Activated CD4-positive, alpha-beta memory T cell treated with anti-CD3 and anti-CD28 coated beads for 36 hours (primary cell): ENCODE measurements at regions of chr5 and their contacts with region 1.

Region 1: GRCh38 chr5:40688127-40688761 is 8.5 kb downstream of the PTGER4 start:
- DNase-seq: peak; percentile 91
- H3K4me3 Mint-ChIP-seq: peak overlapping the region; percentile 93
- H3K27ac Mint-ChIP-seq: peak overlapping the region; percentile 97
- H3K4me1 Mint-ChIP-seq: peaks cover 65% of the 10 kb centered on the region
- H3K27me3 Mint-ChIP-seq: no peaks in the 10 kb centered on the region

Region 2: GRCh38 chr5:40021007-40021406 is 667.2 kb before region 1 on chr5:
- CTCF ChIA-PET with region 1: no interaction called
- POLR2A ChIA-PET with region 1: no interaction called
- intact Hi-C with region 1: loop called (anchors 5 kb)
- DNase-seq: no peak
- H3K4me3 Mint-ChIP-seq: no peak overlapping the region
- H3K27ac Mint-ChIP-seq: no peak overlapping the region
- H3K4me1 Mint-ChIP-seq: peaks cover 2% of the 10 kb centered on the region
- H3K27me3 Mint-ChIP-seq: peaks cover 5% of the 10 kb centered on the region

Region 3: GRCh38 chr5:40277161-40277906 is 410.9 kb before region 1 on chr5:
- CTCF ChIA-PET with region 1: interaction called, 6 read pairs
- POLR2A ChIA-PET with region 1: interaction called, 3 read pairs
- intact Hi-C with region 1: loop called (anchors 2 kb)
- DNase-seq: peak; percentile 63
- H3K4me3 Mint-ChIP-seq: peak overlapping the region; percentile 18
- H3K27ac Mint-ChIP-seq: peak overlapping the region; percentile 97
- H3K4me1 Mint-ChIP-seq: peaks cover 61% of the 10 kb centered on the region
- H3K27me3 Mint-ChIP-seq: no peaks in the 10 kb centered on the region

Region 4: DNA sequence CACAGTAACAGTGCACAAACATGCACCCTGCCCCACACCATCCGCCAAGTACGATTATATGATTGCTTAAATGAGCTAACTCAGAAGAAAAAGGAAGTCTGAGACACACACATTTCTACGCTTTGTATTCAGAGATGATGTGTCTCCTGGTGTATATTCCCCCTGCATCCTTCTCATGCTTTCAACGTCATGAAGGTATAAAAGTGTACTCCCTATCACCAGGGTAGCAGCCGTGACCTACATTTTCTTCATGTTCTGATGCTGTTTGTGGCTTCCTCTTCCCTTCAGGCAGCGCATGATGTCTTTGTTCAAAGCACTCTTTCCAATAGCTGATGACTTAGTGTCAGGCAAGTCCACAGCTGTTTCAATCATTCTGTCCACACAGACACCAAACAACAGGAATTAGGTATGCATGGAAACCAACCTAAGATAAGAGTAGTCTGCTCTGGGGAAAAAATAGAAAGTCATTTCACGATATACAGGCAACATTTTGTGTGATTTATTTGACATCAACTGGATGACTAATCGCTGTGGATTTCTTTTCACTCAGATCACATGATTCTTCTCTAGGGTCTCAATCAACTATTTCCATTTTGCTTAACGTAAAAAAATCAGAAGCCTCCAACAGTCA is 277.9 kb before region 1 on chr5:
- CTCF ChIA-PET with region 1: interaction called, 6 read pairs
- POLR2A ChIA-PET with region 1: interaction called, 26 read pairs
- intact Hi-C with region 1: loop called (anchors 1 kb)
- DNase-seq: peak; percentile 82
- H3K4me3 Mint-ChIP-seq: peak overlapping the region; percentile 62
- H3K27ac Mint-ChIP-seq: peak overlapping the region; percentile 99
- H3K4me1 Mint-ChIP-seq: peaks cover 64% of the 10 kb centered on the region
- H3K27me3 Mint-ChIP-seq: no peaks in the 10 kb centered on the region

Region 5: GRCh38 chr5:40507095-40507494 is 181.1 kb before region 1 on chr5:
- CTCF ChIA-PET with region 1: no interaction called
- POLR2A ChIA-PET with region 1: no interaction called
- intact Hi-C with region 1: loop called (anchors 1 kb)
- DNase-seq: no peak
- H3K4me3 Mint-ChIP-seq: no peak overlapping the region
- H3K27ac Mint-ChIP-seq: no peak overlapping the region
- H3K4me1 Mint-ChIP-seq: peaks cover 11% of the 10 kb centered on the region
- H3K27me3 Mint-ChIP-seq: no peaks in the 10 kb centered on the region

Region 6: GRCh38 chr5:40627706-40628105 is 60.5 kb before region 1 on chr5:
- CTCF ChIA-PET with region 1: no interaction called
- POLR2A ChIA-PET with region 1: no interaction called
- intact Hi-C with region 1: no loop called
- DNase-seq: no peak
- H3K4me3 Mint-ChIP-seq: no peak overlapping the region
- H3K27ac Mint-ChIP-seq: no peak overlapping the region
- H3K4me1 Mint-ChIP-seq: peaks cover 41% of the 10 kb centered on the region
- H3K27me3 Mint-ChIP-seq: no peaks in the 10 kb centered on the region

Region 7: DNA sequence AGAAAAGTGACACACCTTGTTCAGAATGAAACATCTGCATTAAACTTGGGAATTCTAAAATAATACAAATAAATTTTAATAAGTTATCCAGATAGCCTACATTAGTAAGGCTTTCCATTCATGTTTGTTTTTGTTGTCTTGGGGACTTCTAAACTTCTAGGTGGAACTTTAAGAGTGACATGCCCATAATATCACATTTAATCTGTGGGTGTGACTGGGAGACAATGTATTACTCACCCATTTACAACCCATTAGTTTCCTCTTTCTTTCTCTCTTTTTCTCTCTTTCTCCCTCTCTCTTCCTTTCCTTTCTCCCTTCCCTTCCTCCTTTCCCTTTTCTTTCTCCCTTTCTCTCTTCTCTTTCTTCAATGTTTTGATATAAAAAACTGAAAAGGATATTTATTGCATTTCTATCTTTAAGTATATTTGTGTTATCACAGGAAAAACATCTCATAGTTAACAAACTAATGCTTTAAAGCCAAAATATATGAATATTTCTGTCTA is 21.0 kb before region 1 on chr5:
- CTCF ChIA-PET with region 1: no interaction called
- POLR2A ChIA-PET with region 1: no interaction called
- intact Hi-C with region 1: no loop called
- DNase-seq: no peak
- H3K4me3 Mint-ChIP-seq: no peak overlapping the region
- H3K27ac Mint-ChIP-seq: no peak overlapping the region
- H3K4me1 Mint-ChIP-seq: peaks cover 26% of the 10 kb centered on the region
- H3K27me3 Mint-ChIP-seq: no peaks in the 10 kb centered on the region

Region 8: GRCh38 chr5:40755407-40756365 is 67.4 kb after region 1 on chr5 and contains the start of gene TTC33:
- CTCF ChIA-PET with region 1: no interaction called
- POLR2A ChIA-PET with region 1: interaction called, 4 read pairs
- intact Hi-C with region 1: loop called (anchors 2 kb)
- DNase-seq: peak; percentile 98
- H3K4me3 Mint-ChIP-seq: peak within 1 kb of the TSS; percentile 21
- H3K27ac Mint-ChIP-seq: no peak within 1 kb of the TSS
- H3K4me1 Mint-ChIP-seq: peaks cover 17% of the 10 kb centered on the region
- H3K27me3 Mint-ChIP-seq: no peaks in the 10 kb centered on the region
- total RNA-seq, gene TTC33: 30.2 to 34.1 TPM